BJ (cell line): ENCODE measurements at regions of chr18 and their contacts with region 1.

Region 1: GRCh38 chr18:7982216-7982615 is 415.1 kb downstream of the PTPRM start:
- DNase-seq: no peak
- H3K4me3 ChIP-seq: no peak overlapping the region
- H3K27me3 ChIP-seq: no peaks in the 10 kb centered on the region
- CTCF ChIP-seq: no peak

Region 2: DNA sequence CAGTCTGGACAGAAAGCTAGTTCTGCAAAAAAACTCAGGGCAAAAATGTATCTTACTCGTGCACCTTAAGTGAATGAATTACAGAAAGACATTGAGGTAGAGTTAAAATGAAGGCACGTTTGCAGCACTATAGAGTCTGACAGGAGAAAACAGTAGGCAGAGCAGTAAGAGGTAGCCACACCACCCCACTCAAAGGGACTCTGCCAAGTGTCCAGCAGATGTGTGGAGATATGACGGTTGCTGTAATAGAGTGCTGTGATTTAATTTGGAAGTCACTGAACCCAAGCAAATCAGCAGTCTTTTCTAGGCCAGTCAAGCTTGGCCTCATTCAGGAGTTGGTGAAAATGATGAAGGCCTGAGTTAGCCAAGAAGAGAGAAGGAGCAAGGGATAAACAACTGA is 49.3 kb after region 1 on chr18:
- CTCF ChIA-PET with region 1: no interaction called
- POLR2A ChIA-PET with region 1: interaction called, 15 read pairs
- DNase-seq: no peak
- H3K4me3 ChIP-seq: no peak overlapping the region
- H3K27me3 ChIP-seq: no peaks in the 10 kb centered on the region
- CTCF ChIP-seq: no peak